OCI-LY7 (cell line): ENCODE measurements at regions of chr10 and their contacts with region 1.

Region 1: DNA sequence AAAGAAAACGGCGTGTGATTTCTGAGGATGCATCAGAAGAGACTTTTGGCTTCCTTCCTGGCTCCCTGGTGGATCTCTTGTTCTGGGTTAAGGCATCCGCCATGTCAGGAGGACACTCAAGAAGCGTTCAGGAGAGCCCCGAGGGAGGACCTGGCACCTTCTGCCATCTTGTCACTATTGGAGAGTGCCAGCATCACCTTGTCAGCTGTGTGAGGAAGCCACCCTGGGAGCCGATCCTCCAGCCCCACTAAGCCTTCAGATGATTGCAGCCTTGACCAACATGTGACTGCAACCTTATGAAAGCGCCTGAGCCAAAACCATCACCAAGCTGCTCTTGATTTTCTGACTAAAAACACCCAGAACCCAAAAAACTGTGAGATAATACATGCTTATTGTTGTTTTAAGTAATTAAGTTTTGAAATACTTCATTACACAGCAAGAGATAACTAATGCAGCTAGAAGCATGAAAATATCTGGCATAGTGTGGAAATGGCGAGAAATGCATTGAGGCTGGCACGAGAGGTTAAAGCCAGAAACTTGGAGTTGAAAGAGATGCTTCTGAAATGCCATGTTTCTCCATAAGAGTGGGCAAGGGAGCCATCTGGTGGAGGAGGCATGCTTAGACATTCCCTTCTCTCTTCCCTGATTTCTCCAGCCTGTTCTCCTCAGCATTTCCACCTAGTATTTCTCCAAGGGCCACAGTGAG is 5.4 kb upstream of the ZFYVE27 start:
- DNase-seq: peak; percentile 67
- H3K4me3 ChIP-seq: no peak overlapping the region
- H3K27ac ChIP-seq: no peak overlapping the region
- H3K4me1 ChIP-seq: peaks cover 9% of the 10 kb centered on the region
- CTCF ChIP-seq: peak; percentile 88

Region 2: GRCh38 chr10:97572214-97572989 is 159.1 kb before region 1 on chr10 and contains the start of gene ANKRD2:
- CTCF ChIA-PET with region 1: no interaction called
- POLR2A ChIA-PET with region 1: interaction called, 5 read pairs
- intact Hi-C with region 1: loop called (anchors 5 kb)
- DNase-seq: peak; percentile 74
- H3K4me3 ChIP-seq: no peak within 1 kb of the TSS
- H3K27ac ChIP-seq: no peak within 1 kb of the TSS
- H3K4me1 ChIP-seq: no peaks in the 10 kb centered on the region
- CTCF ChIP-seq: peak; percentile 92
- total RNA-seq, gene ANKRD2: not detected in 2 replicates

Region 3: DNA sequence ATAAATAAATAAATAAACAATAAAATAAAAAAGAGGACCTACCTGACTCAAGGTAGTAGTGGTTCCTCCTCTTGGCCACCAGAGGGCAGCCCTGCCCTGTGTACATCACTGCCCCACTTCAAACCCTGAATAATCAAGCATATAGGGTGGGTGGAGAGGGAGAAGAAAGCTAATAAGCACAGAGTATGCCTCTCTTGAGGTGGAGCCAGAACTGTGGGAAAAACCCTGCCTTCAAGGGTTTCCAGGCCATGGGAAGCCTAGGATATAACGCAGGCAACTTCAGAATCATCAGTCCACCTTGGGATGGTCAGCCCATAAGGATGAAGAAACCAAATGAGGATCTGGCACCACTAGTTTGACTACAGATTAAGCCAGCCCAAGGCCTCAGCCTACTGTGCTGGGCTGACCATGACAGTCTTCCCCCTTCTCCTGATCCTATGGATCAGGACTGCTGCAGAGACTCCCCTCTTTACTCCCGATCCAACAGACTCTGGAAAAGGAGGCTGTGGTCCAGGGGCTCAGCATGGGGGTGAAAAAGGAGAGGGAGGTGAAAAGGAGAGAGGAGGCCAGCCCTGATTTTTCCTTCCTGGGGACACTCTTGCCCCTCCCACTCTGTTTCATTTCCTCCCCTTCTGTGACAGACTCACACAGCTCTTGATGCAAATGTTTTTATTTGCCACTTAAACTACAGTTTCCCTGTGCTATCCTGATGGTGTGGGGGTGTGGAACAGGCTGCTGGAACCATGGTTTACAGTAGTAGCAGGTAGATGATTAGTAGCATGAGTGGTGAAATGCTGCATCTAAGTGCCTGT is 54.5 kb before region 1 on chr10:
- CTCF ChIA-PET with region 1: interaction called, 3 read pairs
- POLR2A ChIA-PET with region 1: no interaction called
- intact Hi-C with region 1: loop called (anchors 1 kb)
- DNase-seq: peak; percentile 69
- H3K4me3 ChIP-seq: no peak overlapping the region
- H3K27ac ChIP-seq: no peak overlapping the region
- H3K4me1 ChIP-seq: peaks cover 9% of the 10 kb centered on the region
- CTCF ChIP-seq: peak; percentile 84

Region 4: DNA sequence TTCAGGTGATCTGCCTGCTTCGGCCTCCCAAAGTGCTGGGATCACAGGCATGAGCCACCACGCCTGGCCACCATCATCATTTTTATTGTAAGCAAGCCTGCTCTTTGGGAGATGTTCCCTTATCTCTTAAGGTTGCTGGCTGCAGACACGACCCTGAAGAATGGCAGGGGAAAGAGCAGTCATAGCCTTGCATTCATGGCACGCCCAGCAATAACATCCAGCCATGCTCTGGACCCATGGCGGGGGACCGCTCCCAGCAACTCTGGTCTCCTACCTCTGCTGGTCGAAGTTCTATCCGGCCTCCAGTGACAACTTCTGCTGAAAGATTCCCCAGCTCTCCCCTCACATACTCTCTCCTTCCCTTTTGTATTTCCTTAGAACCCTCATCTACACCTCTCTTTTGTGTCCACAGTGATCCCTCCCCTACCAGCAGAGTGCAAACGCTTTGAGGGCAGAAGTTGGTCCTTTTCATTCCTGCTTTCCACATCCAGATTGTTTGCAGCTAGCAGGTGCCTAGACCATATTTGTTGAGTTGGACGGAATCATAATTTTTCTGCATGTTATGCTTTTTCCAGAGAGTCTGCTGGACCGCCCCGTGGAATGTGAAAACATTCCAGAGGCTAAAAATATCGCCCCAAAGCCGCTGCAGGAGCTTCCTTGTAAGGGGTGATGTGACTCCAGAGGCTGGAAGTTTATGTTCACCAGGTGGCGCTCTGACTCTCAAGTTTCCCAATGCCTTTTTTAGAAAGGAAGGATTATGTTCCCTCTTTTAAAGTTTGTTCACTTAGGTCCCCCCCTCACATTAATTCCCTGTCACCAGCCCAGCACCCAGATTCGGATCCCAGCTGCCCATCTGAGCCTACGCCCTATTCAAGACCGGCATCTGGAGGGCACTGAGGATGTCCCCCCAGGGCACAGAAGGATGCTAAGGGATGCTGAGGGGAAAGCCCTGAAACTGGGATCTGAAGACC is 22.2 kb before region 1 on chr10:
- CTCF ChIA-PET with region 1: no interaction called
- POLR2A ChIA-PET with region 1: no interaction called
- intact Hi-C with region 1: loop called (anchors 1 kb)
- DNase-seq: peak; percentile 41
- H3K4me3 ChIP-seq: no peak overlapping the region
- H3K27ac ChIP-seq: no peak overlapping the region
- H3K4me1 ChIP-seq: no peaks in the 10 kb centered on the region
- CTCF ChIP-seq: peak; percentile 92